Keratinocyte (primary cell): ENCODE measurements at regions of chr9 and their contacts with region 1.

Region 1: GRCh38 chr9:27726244-27727081 is 153.2 kb upstream of the C9orf72 start:
- DNase-seq: peak; percentile 28
- H3K4me3 ChIP-seq: no peak overlapping the region
- H3K27ac ChIP-seq: no peak overlapping the region
- H3K4me1 ChIP-seq: no peaks in the 10 kb centered on the region
- H3K27me3 ChIP-seq: peaks cover 8% of the 10 kb centered on the region
- CTCF ChIP-seq: peak; percentile 81 to 91 (median 90)

Region 2: GRCh38 chr9:27590651-27591050 is 135.8 kb before region 1 on chr9:
- dilution Hi-C with region 1: no loop called
- DNase-seq: no peak
- H3K4me3 ChIP-seq: no peak overlapping the region
- H3K27ac ChIP-seq: no peak overlapping the region
- H3K4me1 ChIP-seq: no peaks in the 10 kb centered on the region
- H3K27me3 ChIP-seq: no peaks in the 10 kb centered on the region
- CTCF ChIP-seq: no peak

Region 3: DNA sequence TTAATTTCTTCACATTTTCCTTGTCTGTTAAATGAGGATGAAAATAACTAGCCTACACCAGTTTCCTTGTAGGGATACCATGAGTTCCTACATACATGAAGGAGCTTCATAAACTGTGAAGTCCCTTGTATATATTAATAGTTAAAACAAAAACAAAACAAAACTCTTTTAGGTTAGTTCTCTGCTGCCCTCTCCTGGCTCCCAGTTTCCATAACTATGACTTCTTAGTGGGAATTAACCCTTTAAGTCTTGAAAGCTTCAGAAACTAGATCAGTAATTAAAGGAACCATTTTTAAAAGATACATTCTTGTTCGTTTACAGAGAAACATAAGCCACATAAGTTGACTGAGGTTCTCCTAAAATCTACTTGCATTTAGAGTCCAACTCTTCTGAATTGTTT is 346.8 kb after region 1 on chr9:
- dilution Hi-C with region 1: loop called (anchors 5 kb)
- DNase-seq: no peak
- H3K4me3 ChIP-seq: no peak overlapping the region
- H3K27ac ChIP-seq: no peak overlapping the region
- H3K4me1 ChIP-seq: no peaks in the 10 kb centered on the region
- H3K27me3 ChIP-seq: no peaks in the 10 kb centered on the region
- CTCF ChIP-seq: peak in 2 of 3 experiments; percentile 36 to 50